CD8-positive, alpha-beta T cell (primary cell): ENCODE measurements at regions of chr1 and their contacts with region 1.

Region 1: DNA sequence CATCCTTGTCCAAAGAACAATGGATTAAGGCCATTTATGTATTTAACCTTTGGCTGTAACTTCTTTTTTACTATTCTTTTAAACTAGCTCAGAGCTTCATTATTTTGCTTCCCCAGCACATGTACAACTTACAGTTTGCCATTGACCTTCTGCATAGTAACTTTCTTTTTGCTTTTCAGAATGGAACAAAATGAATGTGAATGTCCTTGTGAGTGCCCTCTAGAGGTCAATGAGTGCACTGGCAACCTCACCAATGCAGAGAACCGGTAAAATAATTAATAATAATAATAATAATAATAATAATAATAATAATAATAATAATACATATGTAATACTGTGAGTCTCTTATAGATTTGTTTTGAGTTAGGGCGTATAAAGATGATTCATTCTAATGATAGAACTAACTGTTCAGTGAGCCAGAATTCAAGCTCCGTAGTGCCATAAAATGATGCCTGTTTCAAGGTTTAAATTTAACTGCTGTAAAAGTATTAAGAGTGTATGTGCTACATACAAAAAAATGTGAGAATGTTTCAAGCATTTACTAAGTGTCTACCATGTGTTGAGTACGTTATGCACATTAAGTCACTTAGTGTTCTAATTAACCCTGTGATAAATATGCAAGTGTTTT is 69.0 kb upstream of the RAVER2 start:
- DNase-seq: peak in 2 of 9 experiments; percentile 13 to 32
- ATAC-seq: no peak
- H3K4me3 ChIP-seq: no peak overlapping the region
- H3K4me3 Mint-ChIP-seq: no peak overlapping the region
- H3K27ac ChIP-seq: no peak overlapping the region
- H3K27ac Mint-ChIP-seq: no peak overlapping the region
- H3K4me1 ChIP-seq: no peaks in the 10 kb centered on the region
- H3K4me1 Mint-ChIP-seq: no peaks in the 10 kb centered on the region
- H3K27me3 ChIP-seq: no peaks in the 10 kb centered on the region
- H3K27me3 Mint-ChIP-seq: no peaks in the 10 kb centered on the region
- CTCF ChIP-seq: peak; percentile 75

Region 2: GRCh38 chr1:63615768-63616420 is 1059.9 kb before region 1 on chr1:
- CTCF ChIA-PET with region 1: no interaction called
- POLR2A ChIA-PET with region 1: no interaction called
- intact Hi-C with region 1: loop called in 1 of 2 experiments (anchors 10 kb)
- DNase-seq: peak in 7 of 9 experiments; percentile 40 to 76 (median 68)
- ATAC-seq: peak; percentile 75
- H3K4me3 ChIP-seq: no peak overlapping the region
- H3K4me3 Mint-ChIP-seq: no peak overlapping the region
- H3K27ac ChIP-seq: no peak overlapping the region
- H3K27ac Mint-ChIP-seq: no peak overlapping the region
- H3K4me1 ChIP-seq: no peaks in the 10 kb centered on the region
- H3K4me1 Mint-ChIP-seq: peaks cover 4% of the 10 kb centered on the region
- H3K27me3 ChIP-seq: no peaks in the 10 kb centered on the region
- H3K27me3 Mint-ChIP-seq: no peaks in the 10 kb centered on the region
- CTCF ChIP-seq: peak; percentile 77

Region 3: GRCh38 chr1:64363111-64363510 is 312.7 kb before region 1 on chr1:
- CTCF ChIA-PET with region 1: no interaction called
- POLR2A ChIA-PET with region 1: no interaction called
- intact Hi-C with region 1: no loop called
- DNase-seq: no peak
- ATAC-seq: no peak
- H3K4me3 ChIP-seq: no peak overlapping the region
- H3K4me3 Mint-ChIP-seq: no peak overlapping the region
- H3K27ac ChIP-seq: no peak overlapping the region
- H3K27ac Mint-ChIP-seq: no peak overlapping the region
- H3K4me1 ChIP-seq: no peaks in the 10 kb centered on the region
- H3K4me1 Mint-ChIP-seq: no peaks in the 10 kb centered on the region
- H3K27me3 ChIP-seq: no peaks in the 10 kb centered on the region
- H3K27me3 Mint-ChIP-seq: no peaks in the 10 kb centered on the region
- CTCF ChIP-seq: no peak

Region 4: GRCh38 chr1:64396817-64397216 is 279.0 kb before region 1 on chr1:
- CTCF ChIA-PET with region 1: no interaction called
- POLR2A ChIA-PET with region 1: no interaction called
- intact Hi-C with region 1: loop called in 1 of 2 experiments (anchors 10 kb)
- DNase-seq: no peak
- ATAC-seq: no peak
- H3K4me3 ChIP-seq: no peak overlapping the region
- H3K4me3 Mint-ChIP-seq: no peak overlapping the region
- H3K27ac ChIP-seq: no peak overlapping the region
- H3K27ac Mint-ChIP-seq: no peak overlapping the region
- H3K4me1 ChIP-seq: no peaks in the 10 kb centered on the region
- H3K4me1 Mint-ChIP-seq: no peaks in the 10 kb centered on the region
- H3K27me3 ChIP-seq: no peaks in the 10 kb centered on the region
- H3K27me3 Mint-ChIP-seq: peaks cover 3% of the 10 kb centered on the region
- CTCF ChIP-seq: no peak

Region 5: GRCh38 chr1:64499966-64500365 is 175.9 kb before region 1 on chr1:
- CTCF ChIA-PET with region 1: interaction called, 3 read pairs
- POLR2A ChIA-PET with region 1: no interaction called
- intact Hi-C with region 1: loop called in 1 of 2 experiments (anchors 2 kb)
- DNase-seq: peak in 2 of 9 experiments; percentile 10 to 42
- ATAC-seq: peak; percentile 54
- H3K4me3 ChIP-seq: no peak overlapping the region
- H3K4me3 Mint-ChIP-seq: no peak overlapping the region
- H3K27ac ChIP-seq: no peak overlapping the region
- H3K27ac Mint-ChIP-seq: no peak overlapping the region
- H3K4me1 ChIP-seq: no peaks in the 10 kb centered on the region
- H3K4me1 Mint-ChIP-seq: peaks cover 4% of the 10 kb centered on the region
- H3K27me3 ChIP-seq: no peaks in the 10 kb centered on the region
- H3K27me3 Mint-ChIP-seq: peaks cover under 1% of the 10 kb centered on the region
- CTCF ChIP-seq: no peak

Region 6: GRCh38 chr1:64650411-64650810 is 25.4 kb before region 1 on chr1:
- CTCF ChIA-PET with region 1: no interaction called
- POLR2A ChIA-PET with region 1: no interaction called
- intact Hi-C with region 1: no loop called
- DNase-seq: no peak
- ATAC-seq: no peak
- H3K4me3 ChIP-seq: no peak overlapping the region
- H3K4me3 Mint-ChIP-seq: no peak overlapping the region
- H3K27ac ChIP-seq: no peak overlapping the region
- H3K27ac Mint-ChIP-seq: no peak overlapping the region
- H3K4me1 ChIP-seq: no peaks in the 10 kb centered on the region
- H3K4me1 Mint-ChIP-seq: no peaks in the 10 kb centered on the region
- H3K27me3 ChIP-seq: no peaks in the 10 kb centered on the region
- H3K27me3 Mint-ChIP-seq: no peaks in the 10 kb centered on the region
- CTCF ChIP-seq: no peak

Region 7: GRCh38 chr1:64686828-64687724 is 11.2 kb after region 1 on chr1:
- CTCF ChIA-PET with region 1: interaction called, 17 read pairs
- POLR2A ChIA-PET with region 1: no interaction called
- intact Hi-C with region 1: no loop called
- DNase-seq: peak in 5 of 9 experiments; percentile 5 to 65 (median 28)
- ATAC-seq: peak; percentile 79
- H3K4me3 ChIP-seq: no peak overlapping the region
- H3K4me3 Mint-ChIP-seq: no peak overlapping the region
- H3K27ac ChIP-seq: no peak overlapping the region
- H3K27ac Mint-ChIP-seq: no peak overlapping the region
- H3K4me1 ChIP-seq: no peaks in the 10 kb centered on the region
- H3K4me1 Mint-ChIP-seq: no peaks in the 10 kb centered on the region
- H3K27me3 ChIP-seq: no peaks in the 10 kb centered on the region
- H3K27me3 Mint-ChIP-seq: no peaks in the 10 kb centered on the region
- CTCF ChIP-seq: peak; percentile 86